K562 (cell line): ENCODE measurements at regions of chr10 and their contacts with region 1.

Region 1: DNA sequence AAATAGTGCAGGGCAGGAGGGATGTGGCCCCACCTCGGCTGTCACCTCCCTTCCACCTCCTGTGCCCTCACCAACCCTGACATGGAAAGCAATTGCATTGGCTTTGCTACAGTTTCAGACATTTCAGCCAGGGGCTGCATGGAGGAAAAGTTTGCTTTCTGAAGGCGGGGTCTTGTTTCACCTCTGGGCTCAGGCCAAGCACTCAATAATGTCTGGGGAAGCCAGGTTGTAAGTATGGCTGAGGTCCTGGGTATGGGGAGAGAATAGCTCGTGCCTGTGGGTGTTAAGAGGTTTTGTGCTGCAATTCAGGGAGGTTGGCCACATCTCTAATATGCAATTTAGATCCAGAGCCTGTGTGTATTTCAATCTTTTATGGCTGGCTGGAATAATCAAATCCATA is 238.4 kb upstream of the MKI67 start:
- DNase-seq: no peak
- ATAC-seq: no peak
- H3K4me3 ChIP-seq: no peak overlapping the region
- H3K27ac ChIP-seq: no peak overlapping the region
- H3K4me1 ChIP-seq: no peaks in the 10 kb centered on the region
- H3K27me3 ChIP-seq: peaks cover 0 to 13% of the 10 kb centered on the region in 2 experiments; a peak in 1 of 5 replicates
- CTCF ChIP-seq: no peak
- EP300 ChIP-seq: no peak
- POLR2A ChIP-seq: no peak
- RAD21 ChIP-seq: no peak

Region 2: DNA sequence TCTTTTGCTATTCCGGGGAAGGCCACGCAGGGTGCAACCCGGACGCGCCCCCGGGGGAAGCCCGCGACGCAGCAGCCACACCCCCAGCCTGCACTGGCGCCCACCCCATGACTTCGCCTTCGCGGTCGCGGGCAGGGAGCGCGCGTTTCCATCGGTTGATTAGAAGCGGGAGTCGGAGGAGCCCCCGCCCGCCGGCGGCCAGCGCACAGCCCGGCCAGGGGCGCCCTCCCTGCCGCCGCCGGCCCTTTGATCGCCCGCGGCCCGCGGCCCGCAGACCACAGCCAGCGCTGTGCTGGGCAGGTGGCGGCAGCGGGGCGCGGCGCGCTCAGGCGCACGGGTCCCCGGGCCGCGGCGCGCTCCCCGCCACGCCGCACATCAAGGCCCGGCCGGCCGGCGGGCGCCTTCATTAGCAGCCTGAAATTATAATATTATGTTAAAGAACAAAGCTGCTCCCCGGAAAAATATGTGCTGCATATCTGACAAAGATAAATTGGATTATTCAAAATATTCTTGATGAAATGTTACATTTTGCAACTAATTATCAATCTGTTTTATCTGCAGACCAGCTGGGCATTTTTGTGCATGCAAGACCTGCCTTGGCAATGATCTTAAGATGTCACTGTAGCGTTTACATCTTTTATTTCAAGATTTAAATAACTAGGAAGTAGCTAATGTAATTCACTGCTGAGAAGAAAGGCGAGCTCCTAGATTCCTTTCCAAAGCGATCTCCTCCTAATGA is 77.7 kb before region 1 on chr10:
- CTCF ChIA-PET with region 1: no interaction called
- POLR2A ChIA-PET with region 1: no interaction called
- in situ Hi-C with region 1: loop called (anchors 5 kb)
- intact Hi-C with region 1: no loop called
- DNase-seq: no peak
- ATAC-seq: no peak
- H3K4me3 ChIP-seq: no peak overlapping the region
- H3K27ac ChIP-seq: no peak overlapping the region
- H3K4me1 ChIP-seq: no peaks in the 10 kb centered on the region
- H3K27me3 ChIP-seq: peaks cover under 1 to 26% of the 10 kb centered on the region in 2 experiments; a peak in 3 of 5 replicates
- CTCF ChIP-seq: no peak
- EP300 ChIP-seq: no peak
- POLR2A ChIP-seq: no peak
- RAD21 ChIP-seq: no peak